Activated CD4-positive, alpha-beta memory T cell treated with anti-CD3 and anti-CD28 coated beads, Interleukin-2, amount 10 ng/mL, durations not matched to agents 7 days and 5 days (primary cell): ENCODE measurements at regions of chr20 and their contacts with region 1.

Region 1: GRCh38 chr20:3767427-3768341 is at the start of gene ADISSP:
- DNase-seq: peak; percentile 99
- H3K4me3 Mint-ChIP-seq: peak within 1 kb of the TSS; percentile 83
- H3K27ac Mint-ChIP-seq: peak within 1 kb of the TSS; percentile 86
- H3K4me1 Mint-ChIP-seq: peaks cover 25% of the 10 kb centered on the region
- H3K27me3 Mint-ChIP-seq: peaks cover 2% of the 10 kb centered on the region
- total RNA-seq, gene ADISSP: 20.7 to 23.4 TPM

Region 2: DNA sequence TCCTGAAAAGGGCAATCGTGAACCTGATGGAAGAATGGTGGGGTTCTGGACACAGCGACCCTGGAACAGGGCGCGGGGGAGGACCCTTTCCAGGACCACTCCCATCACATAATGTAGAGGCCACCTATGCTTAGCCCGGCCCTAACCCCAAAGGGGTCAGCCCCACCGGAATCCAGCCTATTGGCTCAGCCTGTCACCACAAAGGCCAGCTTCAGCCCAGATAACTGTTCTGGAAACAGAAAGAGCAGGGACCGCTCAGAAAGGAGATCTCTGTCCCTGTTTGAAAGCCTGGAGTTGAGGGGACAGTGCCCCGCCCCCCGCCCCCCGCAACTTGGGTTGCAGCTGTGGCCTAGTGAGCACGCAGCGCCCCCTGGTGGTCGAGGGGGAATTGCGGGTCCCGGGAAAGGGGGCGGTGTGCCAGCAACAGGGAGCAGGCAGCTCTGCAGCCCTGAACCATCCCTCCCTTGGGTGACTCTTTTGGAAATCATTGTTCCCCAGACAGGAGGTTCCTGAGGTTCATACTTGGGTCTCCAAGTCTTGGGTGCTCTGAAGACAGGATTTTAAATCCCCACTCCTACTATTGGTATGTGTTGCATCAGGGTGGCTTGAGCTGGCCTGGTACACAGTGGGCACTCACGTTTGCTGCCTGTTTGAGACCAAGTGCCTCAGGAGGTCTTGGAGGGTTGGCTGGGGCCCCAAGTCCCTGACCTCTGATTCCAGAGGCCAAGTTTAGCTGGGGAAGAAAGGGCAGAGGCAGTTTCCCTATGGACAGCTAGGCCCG is 56.8 kb before region 1 on chr20:
- CTCF ChIA-PET with region 1: interaction called, 13 read pairs
- POLR2A ChIA-PET with region 1: no interaction called
- DNase-seq: peak; percentile 76
- H3K4me3 Mint-ChIP-seq: no peak overlapping the region
- H3K27ac Mint-ChIP-seq: no peak overlapping the region
- H3K4me1 Mint-ChIP-seq: peaks cover 9% of the 10 kb centered on the region
- H3K27me3 Mint-ChIP-seq: peaks cover 8% of the 10 kb centered on the region

Region 3: DNA sequence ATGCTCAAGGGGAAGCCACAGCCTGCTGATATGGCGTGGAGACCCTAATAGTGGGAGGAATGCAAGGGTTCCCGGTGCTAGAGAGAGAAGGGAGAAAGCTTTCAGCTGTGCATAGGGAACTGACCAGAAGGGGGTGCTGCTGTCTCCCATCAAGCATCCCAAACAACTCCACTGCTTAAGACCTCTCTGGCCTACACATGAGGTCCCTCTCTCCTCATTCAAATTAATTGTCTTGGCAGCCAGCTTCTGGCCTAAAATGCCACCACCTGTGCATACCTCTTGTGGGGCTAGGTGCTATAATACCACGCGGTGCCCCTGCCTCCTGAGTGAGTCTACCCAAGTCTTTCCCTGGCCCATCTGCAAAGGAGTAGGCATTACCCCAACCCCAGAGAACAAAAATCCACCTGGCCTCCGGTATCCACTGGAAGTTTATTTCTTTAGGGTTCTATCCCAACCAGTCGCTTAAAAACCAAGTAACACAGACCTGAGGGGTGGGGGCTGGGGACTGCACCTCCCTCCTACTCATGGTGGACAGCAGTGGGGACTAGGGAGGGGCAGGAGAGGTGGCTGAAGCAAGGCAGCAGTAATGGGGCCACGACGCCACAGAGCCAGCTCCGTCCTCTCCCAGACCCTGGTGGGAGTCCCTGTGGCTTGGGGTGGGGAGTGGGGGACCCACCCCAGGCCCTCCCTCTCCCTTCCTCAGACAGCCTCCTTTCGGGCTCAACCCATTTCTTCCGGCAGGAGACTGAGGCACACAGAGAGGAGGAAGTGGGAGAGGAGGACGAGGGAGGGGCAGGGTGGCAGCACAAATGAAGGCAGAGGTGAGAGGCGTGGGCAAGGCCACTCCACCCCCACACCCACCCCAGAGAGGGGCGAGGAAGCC is 14.3 kb before region 1 on chr20:
- CTCF ChIA-PET with region 1: interaction called, 43 read pairs
- POLR2A ChIA-PET with region 1: interaction called, 6 read pairs
- DNase-seq: peak; percentile 71
- H3K4me3 Mint-ChIP-seq: no peak overlapping the region
- H3K27ac Mint-ChIP-seq: peak overlapping the region; percentile 16
- H3K4me1 Mint-ChIP-seq: peaks cover 15% of the 10 kb centered on the region
- H3K27me3 Mint-ChIP-seq: no peaks in the 10 kb centered on the region

Region 4: GRCh38 chr20:3781153-3781910 is 13.6 kb after region 1 on chr20 and contains the start of gene SPEF1:
- CTCF ChIA-PET with region 1: interaction called, 33 read pairs
- POLR2A ChIA-PET with region 1: interaction called, 64 read pairs
- DNase-seq: peak; percentile 51
- H3K4me3 Mint-ChIP-seq: peak within 1 kb of the TSS; percentile 30
- H3K27ac Mint-ChIP-seq: no peak within 1 kb of the TSS
- H3K4me1 Mint-ChIP-seq: peaks cover 59% of the 10 kb centered on the region
- H3K27me3 Mint-ChIP-seq: peaks cover 30% of the 10 kb centered on the region
- total RNA-seq, gene SPEF1: not detected

Region 5: GRCh38 chr20:3786665-3787323 is 19.1 kb after region 1 on chr20 and contains the start of gene CENPB:
- CTCF ChIA-PET with region 1: interaction called, 15 read pairs
- POLR2A ChIA-PET with region 1: interaction called, 64 read pairs
- DNase-seq: peak; percentile 92
- H3K4me3 Mint-ChIP-seq: peak within 1 kb of the TSS; percentile 81
- H3K27ac Mint-ChIP-seq: peak within 1 kb of the TSS; percentile 77
- H3K4me1 Mint-ChIP-seq: peaks cover 45% of the 10 kb centered on the region
- H3K27me3 Mint-ChIP-seq: no peaks in the 10 kb centered on the region
- total RNA-seq, gene CENPB: 67.0 to 68.0 TPM

Region 6: DNA sequence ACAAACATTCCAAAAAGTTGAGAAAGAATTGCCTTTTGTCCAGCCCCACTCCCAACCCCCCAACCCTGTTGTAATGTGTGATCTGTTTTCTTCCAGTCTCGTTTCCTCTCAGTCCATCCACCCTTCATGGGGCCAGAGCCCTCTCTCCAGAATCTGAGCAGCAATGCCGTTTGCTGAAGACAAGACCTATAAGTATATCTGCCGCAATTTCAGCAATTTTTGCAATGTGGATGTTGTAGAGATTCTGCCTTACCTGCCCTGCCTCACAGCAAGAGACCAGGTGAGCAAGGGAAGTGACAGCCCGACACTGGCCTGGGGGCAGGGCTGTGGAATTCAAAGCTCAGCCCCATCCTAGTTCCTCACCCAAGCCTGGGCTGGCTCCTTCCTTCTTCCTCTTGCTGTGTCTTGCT is 86.8 kb after region 1 on chr20:
- CTCF ChIA-PET with region 1: interaction called, 22 read pairs
- POLR2A ChIA-PET with region 1: no interaction called
- DNase-seq: no peak
- H3K4me3 Mint-ChIP-seq: no peak overlapping the region
- H3K27ac Mint-ChIP-seq: no peak overlapping the region
- H3K4me1 Mint-ChIP-seq: peaks cover 6% of the 10 kb centered on the region
- H3K27me3 Mint-ChIP-seq: no peaks in the 10 kb centered on the region

Region 7: GRCh38 chr20:3889489-3890397 is 122.1 kb after region 1 on chr20:
- CTCF ChIA-PET with region 1: no interaction called
- POLR2A ChIA-PET with region 1: interaction called, 10 read pairs
- DNase-seq: peak; percentile 56
- H3K4me3 Mint-ChIP-seq: peak overlapping the region; percentile 97
- H3K27ac Mint-ChIP-seq: peak overlapping the region; percentile 96
- H3K4me1 Mint-ChIP-seq: peaks cover 56% of the 10 kb centered on the region
- H3K27me3 Mint-ChIP-seq: no peaks in the 10 kb centered on the region